CD8-positive, alpha-beta T cell (primary cell): ENCODE measurements at regions of chr12 and their contacts with region 1.

Region 1: GRCh38 chr12:113184900-113185773 is at the starts of genes DDX54 and RITA1:
- DNase-seq: peak; percentile 76 to 93 (median 88)
- ATAC-seq: peak; percentile 79
- H3K4me3 ChIP-seq: peak within 1 kb of the TSS; percentile 89 to 95
- H3K4me3 Mint-ChIP-seq: peak within 1 kb of the TSS; percentile 96
- H3K27ac ChIP-seq: peak within 1 kb of the TSS; percentile 97 to 98
- H3K27ac Mint-ChIP-seq: peak within 1 kb of the TSS; percentile 97
- H3K4me1 ChIP-seq: peaks cover 32% of the 10 kb centered on the region
- H3K4me1 Mint-ChIP-seq: peaks cover 42% of the 10 kb centered on the region
- H3K27me3 ChIP-seq: no peaks in the 10 kb centered on the region
- H3K27me3 Mint-ChIP-seq: no peaks in the 10 kb centered on the region
- CTCF ChIP-seq: no peak
- total RNA-seq, gene DDX54: 75.4 to 85.6 TPM
- total RNA-seq, gene RITA1: 4.3 to 4.5 TPM

Region 2: GRCh38 chr12:113152835-113153814 is 32.0 kb before region 1 on chr12:
- CTCF ChIA-PET with region 1: no interaction called
- POLR2A ChIA-PET with region 1: no interaction called
- intact Hi-C with region 1: loop called in 1 of 2 experiments (anchors 2 kb)
- DNase-seq: peak; percentile 24 to 83 (median 61)
- ATAC-seq: peak; percentile 94
- H3K4me3 ChIP-seq: peak overlapping the region; percentile 45 to 55
- H3K4me3 Mint-ChIP-seq: peak overlapping the region; percentile 79
- H3K27ac ChIP-seq: no peak overlapping the region
- H3K27ac Mint-ChIP-seq: no peak overlapping the region
- H3K4me1 ChIP-seq: peaks cover 22% of the 10 kb centered on the region
- H3K4me1 Mint-ChIP-seq: peaks cover 23% of the 10 kb centered on the region
- H3K27me3 ChIP-seq: peaks cover 0 to 17% of the 10 kb centered on the region in 2 experiments
- H3K27me3 Mint-ChIP-seq: peaks cover 4% of the 10 kb centered on the region
- CTCF ChIP-seq: no peak

Region 3: DNA sequence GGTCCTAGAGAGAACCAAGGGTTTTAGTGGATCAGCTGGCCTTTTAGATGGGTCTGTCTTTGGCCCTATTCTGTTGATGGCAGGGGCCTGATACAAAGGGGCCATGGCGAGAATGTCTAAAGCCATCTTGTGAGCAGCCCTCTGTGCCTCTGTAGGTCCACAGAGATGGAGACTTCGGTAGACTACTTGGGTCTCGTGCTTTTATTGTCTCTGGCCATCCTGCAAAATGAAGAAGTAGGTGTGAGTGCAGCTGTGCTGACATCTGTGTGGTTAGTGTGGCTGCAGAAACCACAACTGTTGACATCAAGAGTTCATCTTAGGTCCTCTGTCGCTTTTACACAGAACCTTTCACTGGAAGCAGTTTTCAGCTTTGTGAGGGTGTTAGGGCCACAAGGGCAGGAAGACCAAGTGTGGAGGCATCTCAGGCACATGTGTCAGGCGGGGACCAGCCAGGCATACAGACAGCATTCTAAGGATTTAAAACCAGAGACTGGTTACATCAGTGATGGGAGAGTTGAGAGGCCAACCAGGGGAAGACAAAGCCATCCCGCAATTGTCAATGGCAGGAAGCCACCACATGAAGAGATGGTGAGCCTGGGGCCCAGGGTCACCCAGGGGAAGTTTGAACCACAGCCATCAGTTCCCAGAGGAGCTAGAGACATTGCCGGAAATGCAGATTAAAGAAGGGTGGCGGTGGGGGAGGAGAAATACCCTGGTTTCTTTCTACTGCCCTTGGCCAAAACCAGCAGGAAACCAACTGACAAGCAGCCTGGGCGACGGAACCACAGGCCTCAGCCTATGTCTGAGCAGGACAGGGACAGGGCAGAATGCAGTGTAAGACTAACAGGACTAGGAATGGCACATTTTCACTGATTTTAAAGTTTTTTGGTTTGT is 23.2 kb after region 1 on chr12:
- CTCF ChIA-PET with region 1: no interaction called
- POLR2A ChIA-PET with region 1: interaction called, 17 read pairs
- intact Hi-C with region 1: loop called in 1 of 2 experiments (anchors 2 kb)
- DNase-seq: peak in 8 of 9 experiments; percentile 31 to 94 (median 59)
- ATAC-seq: peak; percentile 77
- H3K4me3 ChIP-seq: no peak overlapping the region
- H3K4me3 Mint-ChIP-seq: peak overlapping the region; percentile 55
- H3K27ac ChIP-seq: peak overlapping the region; percentile 38 to 74
- H3K27ac Mint-ChIP-seq: peak overlapping the region; percentile 90
- H3K4me1 ChIP-seq: peaks cover 44% of the 10 kb centered on the region
- H3K4me1 Mint-ChIP-seq: peaks cover 44% of the 10 kb centered on the region
- H3K27me3 ChIP-seq: no peaks in the 10 kb centered on the region
- H3K27me3 Mint-ChIP-seq: no peaks in the 10 kb centered on the region
- CTCF ChIP-seq: no peak

Region 4: GRCh38 chr12:113232840-113233585 is 47.9 kb after region 1 on chr12:
- CTCF ChIA-PET with region 1: no interaction called
- POLR2A ChIA-PET with region 1: interaction called, 3 read pairs
- intact Hi-C with region 1: loop called (anchors 1 kb)
- DNase-seq: peak; percentile 46 to 89 (median 74)
- ATAC-seq: peak; percentile 97
- H3K4me3 ChIP-seq: peak overlapping the region; percentile 31 to 34
- H3K4me3 Mint-ChIP-seq: peak overlapping the region; percentile 86
- H3K27ac ChIP-seq: peak overlapping the region; percentile 16 to 46
- H3K27ac Mint-ChIP-seq: peak overlapping the region; percentile 90
- H3K4me1 ChIP-seq: peaks cover 41% of the 10 kb centered on the region
- H3K4me1 Mint-ChIP-seq: peaks cover 42% of the 10 kb centered on the region
- H3K27me3 ChIP-seq: no peaks in the 10 kb centered on the region
- H3K27me3 Mint-ChIP-seq: no peaks in the 10 kb centered on the region
- CTCF ChIP-seq: peak; percentile 55

Region 5: GRCh38 chr12:113358381-113359132 is 173.4 kb after region 1 on chr12 and contains the start of gene PLBD2:
- CTCF ChIA-PET with region 1: no interaction called
- POLR2A ChIA-PET with region 1: no interaction called
- intact Hi-C with region 1: loop called (anchors 1 to 2 kb)
- DNase-seq: peak; percentile 92 to 97 (median 94)
- ATAC-seq: peak; percentile 97
- H3K4me3 ChIP-seq: peak within 1 kb of the TSS; percentile 72 to 79
- H3K4me3 Mint-ChIP-seq: peak within 1 kb of the TSS; percentile 91
- H3K27ac ChIP-seq: peak within 1 kb of the TSS; percentile 81 to 84
- H3K27ac Mint-ChIP-seq: peak within 1 kb of the TSS; percentile 96
- H3K4me1 ChIP-seq: peaks cover 14% of the 10 kb centered on the region
- H3K4me1 Mint-ChIP-seq: peaks cover 16% of the 10 kb centered on the region
- H3K27me3 ChIP-seq: peaks cover 0 to 2% of the 10 kb centered on the region in 2 experiments
- H3K27me3 Mint-ChIP-seq: no peaks in the 10 kb centered on the region
- CTCF ChIP-seq: no peak
- total RNA-seq, gene PLBD2: 9.2 to 9.9 TPM